ENCODE measurements at regions of chr10 and their contacts with region 1.

Region 1: DNA sequence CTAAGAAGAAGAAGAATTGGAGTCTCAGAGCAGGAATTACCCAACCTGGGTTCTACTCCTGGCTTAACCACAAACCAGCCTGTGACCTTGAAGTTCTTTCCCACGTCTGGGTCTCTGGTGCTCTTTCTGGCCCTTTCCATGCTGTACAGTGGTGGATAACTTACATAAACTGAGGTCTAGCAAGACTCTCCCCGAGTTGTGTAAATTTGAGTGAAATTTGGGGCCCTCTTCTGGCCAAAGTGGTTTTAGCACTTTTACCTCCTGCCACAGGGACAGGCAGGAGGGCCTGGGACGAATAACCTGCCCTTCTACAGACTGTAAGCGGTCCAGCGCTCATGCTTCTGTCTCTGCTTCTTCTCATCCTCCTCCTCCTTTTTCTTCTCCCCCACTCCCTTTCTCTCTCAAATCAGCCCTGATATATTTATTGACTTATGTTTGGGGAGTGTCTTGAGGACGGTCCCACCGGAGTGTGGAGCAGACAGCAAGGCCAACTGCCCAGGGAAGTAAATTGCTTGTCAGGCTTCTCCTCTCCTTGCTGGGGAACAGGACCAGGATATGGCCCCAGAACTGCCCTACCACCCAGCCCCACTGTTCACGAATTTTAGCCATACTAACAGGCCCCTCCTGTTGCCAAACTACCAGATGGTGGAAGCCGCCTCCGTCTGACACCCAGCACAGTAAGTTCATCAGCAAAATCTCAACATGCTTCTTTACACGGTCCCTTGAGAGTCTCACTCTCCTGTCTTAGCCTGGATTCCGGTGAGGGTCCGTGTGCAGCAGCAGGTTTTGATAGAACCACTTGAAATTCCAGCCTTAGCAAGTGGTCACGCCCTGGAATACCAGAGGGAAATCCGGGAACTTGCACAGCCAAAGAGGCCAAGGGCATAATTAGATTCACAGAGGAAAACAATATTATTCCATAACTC is 4.0 kb upstream of the SH3PXD2A start:
- DNase-seq: no peak
- H3K4me3 ChIP-seq: no peak overlapping the region
- CTCF ChIP-seq: peak; percentile 45

Region 2: DNA sequence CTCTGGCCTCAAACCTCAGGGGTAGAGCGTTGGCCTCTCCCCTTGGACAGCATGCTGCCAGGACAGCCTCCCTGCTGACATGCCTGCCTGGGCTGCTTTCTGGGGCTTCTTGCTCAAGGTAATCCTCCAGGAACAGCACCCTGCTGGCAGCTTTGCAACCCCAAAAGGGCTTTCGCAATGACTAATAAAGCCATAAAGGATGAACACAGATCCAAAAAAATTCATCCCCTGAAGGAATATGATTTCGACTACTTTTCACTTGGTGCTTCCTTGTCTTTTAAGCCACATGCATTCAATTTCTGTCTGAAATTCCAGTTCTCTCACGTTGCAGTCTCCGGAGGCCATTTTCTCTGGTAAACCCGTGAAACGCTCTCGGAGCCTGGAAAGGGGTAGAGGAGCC is 11.1 kb after region 1 on chr10:
- CTCF ChIA-PET with region 1: interaction called, 19 read pairs
- POLR2A ChIA-PET with region 1: no interaction called
- DNase-seq: no peak
- H3K4me3 ChIP-seq: no peak overlapping the region
- CTCF ChIP-seq: peak; percentile 3

Region 3: GRCh38 chr10:103951928-103952327 is 92.5 kb after region 1 on chr10:
- CTCF ChIA-PET with region 1: no interaction called
- POLR2A ChIA-PET with region 1: no interaction called
- DNase-seq: no peak
- H3K4me3 ChIP-seq: no peak overlapping the region
- CTCF ChIP-seq: no peak

Measured in AG04449 (cell line).